Right lobe of liver (tissue), 6 donors: ENCODE measurements at regions of chr5 and their contacts with region 1.

Region 1: GRCh38 chr5:135977375-135977928 is 22.7 kb upstream of the LECT2 start:
- DNase-seq: peak; percentile 90 to 97 (median 96)
- ATAC-seq: peak; percentile 87 to 94 (median 88)
- H3K4me3 ChIP-seq: no peak overlapping the region
- H3K27ac ChIP-seq: peak overlapping the region; percentile 73 to 98 (median 83)
- H3K4me1 ChIP-seq: peaks cover 0 to 43% (median 15%) of the 10 kb centered on the region in 4 donors
- H3K27me3 ChIP-seq: no peaks in the 10 kb centered on the region
- CTCF ChIP-seq: peak; percentile 88 to 99 (median 94)
- POLR2A ChIP-seq: no peak

Region 2: DNA sequence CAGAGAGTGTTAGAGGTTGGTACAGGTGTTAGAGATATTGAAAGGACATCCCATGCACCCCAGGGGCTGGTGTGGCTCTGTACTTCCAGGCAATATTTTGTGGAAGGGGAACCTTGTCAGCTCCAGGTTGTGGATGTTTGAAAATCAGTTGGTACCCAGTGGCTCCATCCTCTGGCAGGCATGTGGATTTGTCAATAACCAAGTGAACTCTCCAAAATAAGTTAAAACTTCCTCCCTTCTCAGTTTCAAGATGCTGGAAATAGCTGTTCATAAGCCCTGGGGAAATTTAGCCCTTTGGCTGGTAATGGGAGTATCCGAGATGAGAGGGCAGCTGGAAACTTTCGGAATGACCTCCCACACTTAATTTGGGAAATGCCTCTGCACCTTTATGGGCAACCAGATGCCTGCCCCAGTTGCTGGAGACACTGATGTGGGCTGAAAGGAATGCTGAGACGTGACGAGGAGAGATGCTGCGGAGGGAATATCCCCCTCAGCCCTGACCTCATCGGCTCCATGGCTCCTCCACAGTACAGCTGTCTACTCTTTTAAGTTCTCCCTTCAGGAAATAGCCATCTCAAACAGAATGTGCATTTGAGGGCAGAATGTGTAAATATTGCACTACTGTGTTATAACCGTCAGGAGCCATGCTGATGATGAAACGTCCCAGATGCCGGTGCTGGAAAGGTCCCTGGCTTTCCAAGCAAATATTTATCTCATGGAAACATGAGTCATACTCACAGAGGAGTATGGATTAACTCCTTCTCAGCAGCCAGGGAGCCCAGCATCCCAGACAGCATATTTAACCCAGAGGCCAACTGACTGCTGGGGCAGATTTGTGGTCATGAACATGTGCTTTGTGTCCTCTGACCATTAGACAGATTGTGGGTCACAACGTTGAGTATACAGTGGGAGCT is 80.8 kb after region 1 on chr5:
- intact Hi-C with region 1: loop called in 1 of 2 experiments (anchors 10 kb)
- DNase-seq: peak; percentile 65 to 83 (median 76)
- ATAC-seq: peak; percentile 66 to 79 (median 67)
- H3K4me3 ChIP-seq: no peak overlapping the region
- H3K27ac ChIP-seq: peak overlapping the region; percentile 73 to 93 (median 87)
- H3K4me1 ChIP-seq: peaks cover 0 to 37% (median 16%) of the 10 kb centered on the region in 4 donors
- H3K27me3 ChIP-seq: no peaks in the 10 kb centered on the region
- CTCF ChIP-seq: peak; percentile 33 to 46 (median 42)
- POLR2A ChIP-seq: peak; percentile 54

Region 3: GRCh38 chr5:136073714-136074529 is 96.5 kb after region 1 on chr5:
- intact Hi-C with region 1: no loop called
- DNase-seq: peak in 1 of 3 donors; percentile 12
- ATAC-seq: no peak
- H3K4me3 ChIP-seq: no peak overlapping the region
- H3K27ac ChIP-seq: no peak overlapping the region
- H3K4me1 ChIP-seq: no peaks in the 10 kb centered on the region
- H3K27me3 ChIP-seq: no peaks in the 10 kb centered on the region
- CTCF ChIP-seq: no peak
- POLR2A ChIP-seq: no peak